ENCODE measurements at regions of chr18 and their contacts with region 1.

Region 1: GRCh38 chr18:3062798-3063680 is 50.1 kb upstream of the LPIN2 start:
- DNase-seq: peak; percentile 86
- H3K4me3 Mint-ChIP-seq: peak overlapping the region; percentile 55
- H3K27ac Mint-ChIP-seq: peak overlapping the region; percentile 73
- H3K4me1 Mint-ChIP-seq: peaks cover 68% of the 10 kb centered on the region
- H3K27me3 Mint-ChIP-seq: no peaks in the 10 kb centered on the region

Region 2: GRCh38 chr18:2655178-2655953 is 407.7 kb before region 1 on chr18 and contains the start of gene SMCHD1:
- CTCF ChIA-PET with region 1: no interaction called
- POLR2A ChIA-PET with region 1: no interaction called
- intact Hi-C with region 1: loop called (anchors 5 kb)
- DNase-seq: peak; percentile 94
- H3K4me3 Mint-ChIP-seq: peak within 1 kb of the TSS; percentile 91
- H3K27ac Mint-ChIP-seq: peak within 1 kb of the TSS; percentile 97
- H3K4me1 Mint-ChIP-seq: peaks cover 29% of the 10 kb centered on the region
- H3K27me3 Mint-ChIP-seq: no peaks in the 10 kb centered on the region
- total RNA-seq, gene SMCHD1: 86.0 to 94.5 TPM

Region 3: GRCh38 chr18:2985628-2986027 is 77.4 kb before region 1 on chr18:
- CTCF ChIA-PET with region 1: interaction called, 46 read pairs
- POLR2A ChIA-PET with region 1: interaction called, 4 read pairs
- intact Hi-C with region 1: no loop called
- DNase-seq: no peak
- H3K4me3 Mint-ChIP-seq: no peak overlapping the region
- H3K27ac Mint-ChIP-seq: peak overlapping the region; percentile 58
- H3K4me1 Mint-ChIP-seq: peaks cover 74% of the 10 kb centered on the region
- H3K27me3 Mint-ChIP-seq: no peaks in the 10 kb centered on the region

Region 4: GRCh38 chr18:3037423-3037915 is 25.6 kb before region 1 on chr18:
- CTCF ChIA-PET with region 1: interaction called, 12 read pairs
- POLR2A ChIA-PET with region 1: no interaction called
- intact Hi-C with region 1: loop called (anchors 1 kb)
- DNase-seq: peak; percentile 45
- H3K4me3 Mint-ChIP-seq: no peak overlapping the region
- H3K27ac Mint-ChIP-seq: no peak overlapping the region
- H3K4me1 Mint-ChIP-seq: peaks cover 19% of the 10 kb centered on the region
- H3K27me3 Mint-ChIP-seq: no peaks in the 10 kb centered on the region

Region 5: GRCh38 chr18:3088449-3088848 is 25.4 kb after region 1 on chr18:
- CTCF ChIA-PET with region 1: interaction called, 23 read pairs
- POLR2A ChIA-PET with region 1: interaction called, 3 read pairs
- intact Hi-C with region 1: no loop called
- DNase-seq: no peak
- H3K4me3 Mint-ChIP-seq: no peak overlapping the region
- H3K27ac Mint-ChIP-seq: no peak overlapping the region
- H3K4me1 Mint-ChIP-seq: peaks cover 6% of the 10 kb centered on the region
- H3K27me3 Mint-ChIP-seq: no peaks in the 10 kb centered on the region

Measured in activated CD4-positive, alpha-beta memory T cell treated with anti-CD3 and anti-CD28 coated beads for 36 hours (primary cell).